Heart left ventricle (tissue), 16 donors: ENCODE measurements at regions of chr19 and their contacts with region 1.

Region 1: GRCh38 chr19:1249298-1249989 is 1.1 kb downstream of the MIDN start:
- DNase-seq: peak; percentile 92 to 96 (median 94)
- ATAC-seq: peak in 2 of 4 donors; percentile 5 to 6
- H3K4me3 ChIP-seq: peak overlapping the region; percentile 68 to 97 (median 85)
- H3K27ac ChIP-seq: peak overlapping the region; percentile 96 to 100 (median 100)
- H3K4me1 ChIP-seq: peaks cover 21 to 75% (median 57%) of the 10 kb centered on the region in 12 donors
- H3K27me3 ChIP-seq: no peaks in the 10 kb centered on the region
- CTCF ChIP-seq: no peak
- POLR2A ChIP-seq: peak; percentile 85 to 95

Region 2: GRCh38 chr19:796692-797527 is 452.5 kb before region 1 on chr19 and contains the start of gene PTBP1:
- intact Hi-C with region 1: loop called in 1 of 10 experiments (anchors 5 kb)
- DNase-seq: peak; percentile 100
- ATAC-seq: peak; percentile 88 to 94 (median 92)
- H3K4me3 ChIP-seq: peak within 1 kb of the TSS; percentile 67 to 100 (median 90)
- H3K27ac ChIP-seq: peak within 1 kb of the TSS; percentile 93 to 100 (median 99)
- H3K4me1 ChIP-seq: peaks cover 18 to 56% (median 48%) of the 10 kb centered on the region in 12 donors
- H3K27me3 ChIP-seq: no peaks in the 10 kb centered on the region
- CTCF ChIP-seq: peak in 6 of 12 donors; percentile 16 to 58 (median 32)
- POLR2A ChIP-seq: peak in 1 of 2 donors; percentile 61
- total RNA-seq, gene PTBP1: 47.6 to 144 (median 55.6) TPM

Region 3: DNA sequence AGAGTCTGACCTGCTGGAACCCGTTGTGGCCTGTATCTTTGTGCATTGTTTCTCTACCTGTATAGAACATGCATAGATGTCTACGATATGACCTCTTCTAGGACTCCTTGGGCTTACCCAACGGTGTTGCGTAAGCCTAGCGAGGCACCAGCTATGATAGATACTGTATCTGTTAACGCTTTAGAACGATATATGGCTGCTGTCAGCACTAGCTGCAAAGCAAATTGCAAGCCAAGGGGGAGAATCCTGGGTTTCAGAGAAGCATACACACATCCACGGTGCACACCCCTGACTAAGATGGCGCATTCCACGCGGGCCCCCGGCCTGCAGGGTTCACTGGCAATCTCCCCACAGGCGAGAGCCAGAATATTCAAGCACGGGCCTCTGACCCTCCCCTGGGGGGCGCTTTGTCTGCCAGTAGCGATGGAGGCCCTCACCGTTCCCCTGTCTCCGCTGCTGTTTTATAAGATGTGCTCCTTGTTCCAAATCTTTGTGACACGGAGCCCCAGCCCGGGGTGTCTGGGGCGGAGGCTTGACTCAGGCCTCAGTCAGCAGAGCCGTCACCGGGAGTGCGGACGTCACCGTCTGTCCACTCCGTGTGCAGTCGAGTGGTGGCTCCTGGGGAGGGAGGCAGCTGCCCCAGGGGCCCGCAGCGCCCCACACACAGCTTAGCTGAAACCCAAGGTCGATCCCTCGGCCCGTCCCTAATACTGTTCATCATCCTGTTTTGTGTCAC is 175.8 kb after region 1 on chr19:
- intact Hi-C with region 1: no loop called
- DNase-seq: no peak
- ATAC-seq: no peak
- H3K4me3 ChIP-seq: no peak overlapping the region
- H3K27ac ChIP-seq: no peak overlapping the region
- H3K4me1 ChIP-seq: peaks cover 0 to 35% (median 4%) of the 10 kb centered on the region in 12 donors
- H3K27me3 ChIP-seq: no peaks in the 10 kb centered on the region
- CTCF ChIP-seq: no peak
- POLR2A ChIP-seq: no peak